Endothelial cell of umbilical vein (primary cell): ENCODE measurements at regions of chr4 and their contacts with region 1.

Region 1: GRCh38 chr4:135418353-135418752 is 1216.8 kb upstream of the PABPC4L start:
- DNase-seq: no peak
- H3K4me3 ChIP-seq: no peak overlapping the region
- H3K27ac ChIP-seq: no peak overlapping the region
- H3K4me1 ChIP-seq: no peaks in the 10 kb centered on the region
- H3K27me3 ChIP-seq: no peaks in the 10 kb centered on the region
- CTCF ChIP-seq: peak in 1 of 2 donors; percentile 11
- POLR2A ChIP-seq: no peak

Region 2: GRCh38 chr4:135319680-135320079 is 98.7 kb before region 1 on chr4:
- CTCF ChIA-PET with region 1: no interaction called
- POLR2A ChIA-PET with region 1: no interaction called
- dilution Hi-C with region 1: no loop called
- intact Hi-C with region 1: no loop called
- DNase-seq: no peak
- H3K4me3 ChIP-seq: no peak overlapping the region
- H3K27ac ChIP-seq: no peak overlapping the region
- H3K4me1 ChIP-seq: no peaks in the 10 kb centered on the region
- H3K27me3 ChIP-seq: no peaks in the 10 kb centered on the region
- CTCF ChIP-seq: no peak
- POLR2A ChIP-seq: no peak

Region 3: DNA sequence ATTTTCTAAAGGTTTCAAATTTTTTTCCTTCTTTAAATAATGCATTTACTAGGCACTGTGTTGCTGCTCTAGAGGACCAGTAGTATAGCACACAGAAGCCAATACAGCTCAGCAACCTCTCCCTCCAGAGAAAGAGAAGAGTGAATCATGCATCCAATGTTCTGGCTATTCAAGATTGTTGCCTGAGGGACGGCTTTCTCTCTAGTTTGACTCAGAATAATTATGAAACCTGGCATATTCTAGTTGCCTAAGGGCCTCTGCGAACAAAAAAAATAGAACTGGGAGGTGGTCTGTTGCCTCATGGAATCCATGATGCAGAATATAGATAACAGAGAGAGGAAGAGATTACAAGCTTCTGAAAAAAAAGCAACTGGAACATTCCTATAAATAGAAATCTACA is 16.6 kb after region 1 on chr4:
- CTCF ChIA-PET with region 1: interaction called, 12 read pairs
- POLR2A ChIA-PET with region 1: no interaction called
- dilution Hi-C with region 1: no loop called
- intact Hi-C with region 1: no loop called
- DNase-seq: no peak
- H3K4me3 ChIP-seq: no peak overlapping the region
- H3K27ac ChIP-seq: no peak overlapping the region
- H3K4me1 ChIP-seq: no peaks in the 10 kb centered on the region
- H3K27me3 ChIP-seq: no peaks in the 10 kb centered on the region
- CTCF ChIP-seq: no peak
- POLR2A ChIP-seq: no peak